ENCODE measurements at regions of chr15 and their contacts with region 1.

Region 1: DNA sequence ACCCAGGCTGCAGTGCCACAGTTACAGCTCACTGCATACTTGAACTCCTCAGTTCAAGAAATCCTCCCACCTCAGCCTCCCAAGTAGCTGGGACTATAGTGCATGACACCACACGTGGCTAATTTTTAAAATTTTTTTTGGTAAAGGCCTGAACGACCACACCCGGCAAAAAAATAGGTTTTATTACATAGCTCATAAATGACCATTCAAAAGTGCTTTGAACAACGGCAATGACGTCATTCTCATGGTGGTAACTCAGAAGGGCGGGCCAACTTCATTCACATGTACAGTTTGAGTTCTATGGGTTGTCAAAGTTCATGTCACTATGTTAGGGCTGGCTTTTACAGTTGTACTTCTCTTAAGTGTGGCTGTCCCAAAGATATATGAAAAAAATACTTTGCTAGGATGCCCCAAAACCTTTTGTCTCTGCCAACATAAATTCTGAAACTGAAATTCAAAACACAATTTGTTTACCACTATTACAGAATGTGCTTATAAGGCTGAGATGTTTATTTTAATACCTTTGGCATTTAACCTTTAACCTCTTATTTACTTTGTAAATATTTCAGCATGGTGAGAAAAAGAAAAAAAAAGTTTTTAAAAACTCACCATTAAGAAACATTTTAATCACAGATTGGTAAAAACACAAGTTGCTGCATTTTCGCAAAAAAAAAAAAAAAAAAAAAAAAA is 6.2 kb downstream of the MYO1E start:
- DNase-seq: no peak
- H3K4me3 ChIP-seq: no peak overlapping the region
- CTCF ChIP-seq: no peak
- POLR2A ChIP-seq: no peak

Region 2: DNA sequence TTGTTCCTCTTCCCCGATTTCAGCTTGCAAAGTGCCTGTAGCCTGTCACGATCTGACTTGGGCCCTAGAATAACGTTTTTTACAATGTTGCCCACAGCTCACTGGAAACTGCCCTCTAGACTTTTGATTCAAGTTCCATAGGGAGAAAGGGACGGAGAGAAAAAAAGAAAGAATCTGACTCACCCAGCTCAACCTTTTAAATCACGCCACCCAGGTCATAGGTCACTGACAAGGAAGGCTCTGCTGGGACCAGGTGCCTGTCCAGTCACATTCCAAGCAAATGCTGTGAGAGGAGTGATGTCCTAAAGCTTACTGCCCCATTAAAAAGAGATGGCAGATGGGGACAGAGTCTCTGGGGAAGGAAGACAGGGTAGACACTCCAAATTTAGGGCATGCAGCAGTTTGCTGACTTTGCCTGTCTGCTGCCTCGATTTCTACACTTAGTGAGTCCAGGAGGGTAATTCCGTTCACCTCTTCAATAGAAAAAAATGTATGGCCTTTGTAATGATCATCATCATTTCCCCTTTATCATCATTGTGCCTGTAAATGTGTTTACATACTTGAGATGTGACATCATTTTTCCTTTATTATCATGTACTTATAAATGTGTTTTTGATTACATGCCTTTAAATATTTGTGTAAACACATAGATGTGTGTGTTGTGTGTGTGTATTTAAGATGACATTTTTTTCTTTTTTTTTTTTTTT is 14.6 kb after region 1 on chr15:
- intact Hi-C with region 1: loop called (anchors 2 kb)
- DNase-seq: no peak
- H3K4me3 ChIP-seq: no peak overlapping the region
- CTCF ChIP-seq: no peak
- POLR2A ChIP-seq: no peak

Region 3: DNA sequence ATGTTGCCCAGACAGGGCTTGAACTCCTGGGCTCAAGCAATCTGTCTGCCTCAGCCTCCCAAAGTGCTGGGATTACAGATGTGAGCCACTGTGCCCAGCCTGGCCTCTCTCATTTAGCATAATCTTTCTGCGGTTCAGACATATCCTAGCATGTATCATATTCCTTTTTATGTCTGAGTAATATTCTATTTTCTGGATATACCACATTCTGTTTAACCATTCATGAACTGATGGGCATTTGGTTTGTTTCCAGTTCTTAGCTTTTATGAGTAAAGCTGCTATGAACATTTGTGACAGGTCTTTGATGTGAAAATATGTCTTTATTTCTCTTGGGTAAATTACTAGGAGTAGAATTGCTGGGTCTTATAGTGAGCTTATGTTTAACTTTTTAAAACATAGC is 95.0 kb after region 1 on chr15:
- intact Hi-C with region 1: no loop called
- DNase-seq: peak in 1 of 2 donors; percentile 17
- H3K4me3 ChIP-seq: no peak overlapping the region
- CTCF ChIP-seq: no peak
- POLR2A ChIP-seq: no peak

Region 4: GRCh38 chr15:59656897-59657634 is 290.6 kb after region 1 on chr15 and contains the start of gene GTF2A2:
- intact Hi-C with region 1: no loop called
- DNase-seq: peak; percentile 93 to 99
- H3K4me3 ChIP-seq: peak within 1 kb of the TSS; percentile 58
- CTCF ChIP-seq: no peak
- POLR2A ChIP-seq: peak in 1 of 2 donors; percentile 11
- total RNA-seq, gene GTF2A2: 13.4 to 32.7 (median 17.0) TPM

Measured in lower leg skin (tissue), 4 donors.